ENCODE measurements at regions of chr11 and their contacts with region 1.

Region 1: DNA sequence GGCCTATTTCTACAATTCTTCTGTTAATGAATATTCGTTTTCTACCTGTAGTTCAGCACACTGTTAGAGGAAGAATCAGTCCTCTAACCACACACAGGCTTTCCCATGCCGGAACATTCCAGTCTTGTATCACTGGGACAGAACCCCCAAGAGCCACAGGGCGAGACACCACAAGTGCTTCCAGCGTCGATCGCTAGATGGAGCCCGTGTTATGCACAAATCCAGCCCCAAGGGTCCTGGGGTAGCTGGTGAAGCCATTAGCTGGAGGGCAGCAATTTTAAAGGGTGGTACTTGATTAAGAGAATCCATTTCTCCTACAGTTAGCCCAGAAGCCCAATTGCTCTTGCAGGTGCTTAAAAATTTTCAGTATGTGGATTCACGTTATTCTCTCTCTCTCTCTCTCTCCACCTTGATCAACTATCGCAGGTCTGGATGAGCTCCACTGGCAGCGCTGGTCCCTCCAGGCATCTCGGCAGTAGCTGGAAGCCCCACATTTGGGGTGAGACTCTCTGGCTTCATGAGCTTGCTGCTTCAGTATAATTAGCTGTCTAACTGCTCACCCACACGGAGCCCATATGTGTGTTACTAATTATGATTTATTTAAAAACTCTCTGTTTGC is 148.2 kb upstream of the SNX19 start:
- DNase-seq: peak; percentile 13
- ATAC-seq: peak; percentile 91
- H3K4me3 ChIP-seq: no peak overlapping the region
- H3K27ac ChIP-seq: no peak overlapping the region
- H3K4me1 ChIP-seq: no peaks in the 10 kb centered on the region
- H3K27me3 ChIP-seq: no peaks in the 10 kb centered on the region
- CTCF ChIP-seq: peak; percentile 31 to 82 (median 72); a peak in 5 of 6 replicates
- POLR2A ChIP-seq: no peak
- RAD21 ChIP-seq: peak; percentile 68

Region 2: GRCh38 chr11:131674051-131674755 is 609.7 kb after region 1 on chr11:
- CTCF ChIA-PET with region 1: interaction called, 4 read pairs
- POLR2A ChIA-PET with region 1: no interaction called
- RAD21 ChIA-PET with region 1: no interaction called
- intact Hi-C with region 1: loop called (anchors 1 kb)
- DNase-seq: peak; percentile 3
- ATAC-seq: peak; percentile 91
- H3K4me3 ChIP-seq: no peak overlapping the region
- H3K27ac ChIP-seq: no peak overlapping the region
- H3K4me1 ChIP-seq: no peaks in the 10 kb centered on the region
- H3K27me3 ChIP-seq: no peaks in the 10 kb centered on the region
- CTCF ChIP-seq: peak; percentile 50 to 89 (median 83); a peak in 5 of 6 replicates
- POLR2A ChIP-seq: no peak
- RAD21 ChIP-seq: peak; percentile 77